ENCODE measurements at regions of chr18 and their contacts with region 1.

Region 1: GRCh38 chr18:70337139-70337972 is 48.5 kb downstream of the SOCS6 start:
- DNase-seq: peak in 2 of 5 donors; percentile 27 to 56
- ATAC-seq: peak; percentile 90 to 95 (median 93)
- H3K4me3 ChIP-seq: peak overlapping the region in 5 of 12 donors; percentile 0 to 35 (median 14)
- H3K27ac ChIP-seq: peak overlapping the region; percentile 23 to 84 (median 68)
- H3K4me1 ChIP-seq: peaks cover 0 to 8% (median 0%) of the 10 kb centered on the region in 12 donors
- H3K27me3 ChIP-seq: no peaks in the 10 kb centered on the region
- CTCF ChIP-seq: no peak
- POLR2A ChIP-seq: no peak

Region 2: GRCh38 chr18:70205421-70206397 is 131.6 kb before region 1 on chr18 and contains the start of gene RTTN:
- intact Hi-C with region 1: loop called in 1 of 10 experiments (anchors 5 kb)
- DNase-seq: peak; percentile 94 to 97 (median 96)
- ATAC-seq: peak; percentile 99 to 100 (median 100)
- H3K4me3 ChIP-seq: peak within 1 kb of the TSS; percentile 46 to 92 (median 77)
- H3K27ac ChIP-seq: peak within 1 kb of the TSS; percentile 93 to 99 (median 97)
- H3K4me1 ChIP-seq: peaks cover 0 to 19% (median 11%) of the 10 kb centered on the region in 12 donors
- H3K27me3 ChIP-seq: no peaks in the 10 kb centered on the region
- CTCF ChIP-seq: peak in 1 of 12 donors; percentile 16
- POLR2A ChIP-seq: peak in 1 of 2 donors; percentile 17
- total RNA-seq, gene RTTN: 6.6 to 14.3 (median 8.8) TPM

Region 3: DNA sequence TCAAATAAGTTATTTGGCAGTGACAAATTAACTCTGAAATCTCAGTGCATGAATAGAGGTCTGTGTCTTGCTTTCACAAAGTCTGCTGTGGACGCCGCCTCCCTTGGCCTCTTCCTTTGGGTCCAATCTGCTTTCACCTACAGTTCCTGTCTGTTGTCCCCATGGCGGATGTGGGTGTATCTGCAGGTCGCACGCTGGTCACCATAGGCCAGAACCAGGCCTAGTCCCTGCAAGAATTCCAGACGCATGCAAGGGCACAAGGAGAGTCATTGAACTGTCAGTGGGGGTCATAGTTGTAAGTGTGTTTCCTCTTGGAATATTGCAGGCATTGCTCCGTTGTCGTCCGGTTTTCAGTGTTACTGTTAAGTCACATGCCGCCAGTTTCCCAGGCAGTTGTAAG is 41.1 kb before region 1 on chr18:
- intact Hi-C with region 1: loop called in 1 of 10 experiments (anchors 5 kb)
- DNase-seq: peak in 4 of 5 donors; percentile 42 to 64 (median 49)
- ATAC-seq: peak; percentile 72 to 86 (median 78)
- H3K4me3 ChIP-seq: peak overlapping the region in 6 of 12 donors; percentile 1 to 24 (median 5)
- H3K27ac ChIP-seq: peak overlapping the region in 11 of 12 donors; percentile 13 to 75 (median 57)
- H3K4me1 ChIP-seq: peaks cover 0 to 92% (median 66%) of the 10 kb centered on the region in 12 donors
- H3K27me3 ChIP-seq: no peaks in the 10 kb centered on the region
- CTCF ChIP-seq: no peak
- POLR2A ChIP-seq: no peak